CD8-positive, alpha-beta memory T cell (primary cell): ENCODE measurements at regions of chr12 and their contacts with region 1.

Region 1: DNA sequence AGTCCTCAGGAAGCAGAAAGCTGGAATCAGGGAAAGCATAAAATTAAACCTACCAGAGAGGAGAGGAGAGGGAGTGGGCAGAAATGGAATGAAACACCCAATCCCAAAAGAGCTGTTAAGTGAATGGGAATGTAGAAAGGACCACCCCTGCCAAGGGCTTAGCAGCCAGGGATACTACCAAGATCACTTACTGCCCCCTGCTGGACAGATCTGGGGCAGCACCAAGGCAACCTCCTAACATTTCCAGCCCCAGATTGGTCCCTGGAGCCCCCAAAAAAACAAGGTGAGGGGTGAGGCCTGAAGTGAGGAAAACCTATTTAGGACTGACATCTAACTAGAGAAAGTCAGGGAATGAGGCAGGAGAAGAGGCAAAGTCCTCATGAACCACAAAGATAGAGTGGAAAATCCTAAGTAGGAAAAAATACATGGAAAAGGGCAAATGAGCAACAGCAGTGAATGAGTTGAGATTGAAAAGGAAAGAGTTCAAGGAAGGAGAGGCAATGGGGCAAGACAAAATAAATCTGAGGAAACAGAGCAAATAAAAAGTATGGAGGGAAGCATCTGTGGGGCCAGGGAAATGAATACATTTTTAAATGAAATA is 11.2 kb upstream of the FKBP11 start:
- DNase-seq: peak; percentile 75 to 88 (median 82)
- H3K4me3 ChIP-seq: no peak overlapping the region
- H3K4me3 Mint-ChIP-seq: no peak overlapping the region
- H3K27ac ChIP-seq: no peak overlapping the region
- H3K27ac Mint-ChIP-seq: peak overlapping the region; percentile 38 to 98 (median 96)
- H3K4me1 ChIP-seq: peaks cover 33% of the 10 kb centered on the region
- H3K4me1 Mint-ChIP-seq: peaks cover 36 to 49% (median 42%) of the 10 kb centered on the region in 3 donors
- H3K27me3 ChIP-seq: no peaks in the 10 kb centered on the region
- H3K27me3 Mint-ChIP-seq: no peaks in the 10 kb centered on the region

Region 2: GRCh38 chr12:48917857-48918537 is 18.5 kb before region 1 on chr12:
- CTCF ChIA-PET with region 1: interaction called, 129 read pairs
- POLR2A ChIA-PET with region 1: interaction called, 3 read pairs
- DNase-seq: peak; percentile 16 to 67 (median 47)
- H3K4me3 ChIP-seq: peak overlapping the region; percentile 65
- H3K4me3 Mint-ChIP-seq: peak overlapping the region; percentile 85 to 98 (median 93)
- H3K27ac ChIP-seq: peak overlapping the region; percentile 3
- H3K27ac Mint-ChIP-seq: peak overlapping the region; percentile 91 to 97 (median 94)
- H3K4me1 ChIP-seq: peaks cover 31% of the 10 kb centered on the region
- H3K4me1 Mint-ChIP-seq: peaks cover 41 to 53% (median 46%) of the 10 kb centered on the region in 3 donors
- H3K27me3 ChIP-seq: no peaks in the 10 kb centered on the region
- H3K27me3 Mint-ChIP-seq: no peaks in the 10 kb centered on the region

Region 3: DNA sequence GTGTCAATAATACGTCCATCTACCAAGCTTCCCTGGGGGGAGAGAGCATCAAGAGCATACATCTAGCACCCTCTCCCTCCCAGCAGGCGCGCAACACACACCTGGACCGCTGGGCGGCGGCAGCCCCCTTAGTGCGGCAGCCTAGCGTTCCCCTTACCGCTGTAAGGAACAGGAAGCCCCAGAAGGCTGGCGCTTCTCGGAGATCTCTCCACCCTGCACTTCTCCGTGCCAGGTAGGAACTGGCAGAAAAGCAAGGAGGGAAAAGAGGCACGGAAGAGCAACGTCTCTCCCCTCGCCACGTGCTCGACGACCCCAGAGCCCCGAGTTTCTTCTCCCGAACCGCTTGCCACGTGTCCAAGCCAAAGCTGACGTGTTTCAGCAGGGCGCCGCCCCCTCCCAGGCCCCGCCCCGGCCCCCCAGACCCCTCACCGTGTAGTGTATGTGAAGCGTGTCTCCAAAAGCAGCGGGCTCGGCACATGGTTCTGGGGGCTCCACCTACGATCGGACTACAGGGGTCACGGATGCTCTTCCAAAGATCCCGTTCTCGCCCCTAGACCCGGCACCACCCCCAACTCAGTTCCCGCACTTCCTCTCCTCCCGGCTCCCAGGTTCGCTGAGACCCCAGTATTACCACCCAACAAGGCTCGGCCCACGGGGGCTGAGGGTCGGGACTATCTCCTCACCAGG is 11.7 kb before region 1 on chr12:
- CTCF ChIA-PET with region 1: interaction called, 129 read pairs
- POLR2A ChIA-PET with region 1: interaction called, 20 read pairs
- DNase-seq: peak; percentile 63 to 86 (median 81)
- H3K4me3 ChIP-seq: peak overlapping the region; percentile 96
- H3K4me3 Mint-ChIP-seq: peak overlapping the region; percentile 88 to 98 (median 96)
- H3K27ac ChIP-seq: peak overlapping the region; percentile 90
- H3K27ac Mint-ChIP-seq: peak overlapping the region; percentile 91 to 100 (median 98)
- H3K4me1 ChIP-seq: peaks cover 12% of the 10 kb centered on the region
- H3K4me1 Mint-ChIP-seq: peaks cover 53 to 64% (median 62%) of the 10 kb centered on the region in 3 donors
- H3K27me3 ChIP-seq: no peaks in the 10 kb centered on the region
- H3K27me3 Mint-ChIP-seq: no peaks in the 10 kb centered on the region